Heart right ventricle (tissue), 16 donors: ENCODE measurements at regions of chr19 and their contacts with region 1.

Region 1: DNA sequence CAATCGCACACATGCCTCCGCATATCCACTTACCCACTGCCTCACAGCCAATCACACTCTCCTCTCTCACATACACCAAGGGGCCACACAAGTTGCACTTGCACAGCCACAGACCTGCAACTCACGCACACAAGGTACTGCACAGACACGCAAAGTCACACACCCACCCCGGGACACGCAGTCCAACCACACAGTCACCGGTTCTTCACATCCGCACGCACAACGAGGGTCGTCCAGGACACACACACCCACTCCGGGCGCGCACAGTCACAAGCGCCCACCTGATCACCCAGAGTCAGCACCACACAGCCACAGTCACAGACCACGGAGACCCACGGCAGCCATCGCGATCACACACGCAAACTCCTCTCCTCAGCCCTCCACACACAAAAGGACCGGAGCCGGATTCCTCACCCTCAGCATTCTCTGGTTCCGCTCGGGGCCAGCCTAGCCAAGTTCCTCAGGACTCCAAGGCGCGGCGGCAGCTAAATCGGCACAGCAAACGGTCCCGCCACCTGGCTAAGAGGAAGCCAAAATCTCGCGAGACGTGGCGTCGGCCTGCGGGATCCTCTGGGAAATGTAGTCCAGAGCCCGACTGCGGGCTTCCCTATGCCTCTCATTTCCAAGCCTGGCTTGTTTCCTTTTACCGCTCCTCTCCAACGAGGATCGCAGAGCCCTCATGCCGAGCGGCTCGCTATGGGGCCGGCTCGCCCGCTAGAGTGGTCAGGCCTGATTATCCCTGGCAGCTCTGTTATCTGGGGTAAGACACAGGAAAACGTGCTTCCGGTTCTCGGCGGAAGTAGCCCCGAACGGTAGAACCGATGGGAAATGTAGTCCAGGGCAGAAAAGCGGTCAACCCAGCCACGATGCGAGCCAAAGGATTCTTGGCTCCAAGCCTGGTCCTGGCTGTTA is at the start of gene ZNF850:
- DNase-seq: peak; percentile 96
- ATAC-seq: peak; percentile 94 to 98 (median 98)
- H3K4me3 ChIP-seq: peak within 1 kb of the TSS; percentile 26 to 96 (median 72)
- H3K27ac ChIP-seq: peak within 1 kb of the TSS; percentile 20 to 92 (median 85)
- H3K4me1 ChIP-seq: peaks cover 0 to 26% (median 17%) of the 10 kb centered on the region in 9 donors
- H3K27me3 ChIP-seq: no peaks in the 10 kb centered on the region
- CTCF ChIP-seq: no peak
- total RNA-seq, gene ZNF850: 1.9 to 7.9 (median 4.7) TPM

Region 2: GRCh38 chr19:36207605-36208252 is 564.8 kb before region 1 on chr19:
- intact Hi-C with region 1: no loop called
- DNase-seq: no peak
- ATAC-seq: no peak
- H3K4me3 ChIP-seq: no peak overlapping the region
- H3K27ac ChIP-seq: no peak overlapping the region
- H3K4me1 ChIP-seq: no peaks in the 10 kb centered on the region
- H3K27me3 ChIP-seq: no peaks in the 10 kb centered on the region
- CTCF ChIP-seq: no peak

Region 3: DNA sequence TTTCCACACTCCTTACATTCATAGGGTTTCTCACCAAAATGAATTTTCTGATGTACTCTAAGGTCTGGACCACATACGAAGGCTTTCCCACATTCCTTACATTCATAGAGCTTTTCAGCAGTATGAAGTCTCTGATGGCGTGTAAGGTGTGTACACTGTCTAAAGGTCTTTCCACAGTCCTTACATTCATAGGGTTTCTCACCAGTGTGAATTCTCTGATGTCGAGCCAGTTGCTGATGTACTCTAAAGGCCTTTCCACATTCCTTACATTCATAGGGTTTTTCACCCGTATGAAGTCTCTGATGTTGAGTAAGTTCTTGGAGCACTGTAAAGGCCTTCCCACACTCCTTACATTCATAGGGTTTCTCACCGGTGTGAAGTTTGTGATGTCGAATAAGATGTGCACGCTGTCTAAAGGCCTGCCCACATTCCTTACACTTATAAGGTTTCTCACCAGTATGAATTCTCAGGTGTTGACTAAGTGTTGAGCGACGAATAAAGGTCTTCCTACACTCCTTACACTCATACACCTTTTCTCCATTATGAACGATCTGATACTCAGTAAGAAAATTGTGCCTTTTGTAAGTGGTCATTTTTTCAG is 431.7 kb before region 1 on chr19:
- intact Hi-C with region 1: no loop called
- DNase-seq: no peak
- ATAC-seq: no peak
- H3K4me3 ChIP-seq: no peak overlapping the region
- H3K27ac ChIP-seq: no peak overlapping the region
- H3K4me1 ChIP-seq: no peaks in the 10 kb centered on the region
- H3K27me3 ChIP-seq: no peaks in the 10 kb centered on the region
- CTCF ChIP-seq: no peak

Region 4: GRCh38 chr19:36687214-36688056 is 85.1 kb before region 1 on chr19 and contains the start of gene ZNF567:
- intact Hi-C with region 1: loop called in 1 of 10 experiments (anchors 10 kb)
- DNase-seq: peak; percentile 98
- ATAC-seq: peak; percentile 99 to 100 (median 99)
- H3K4me3 ChIP-seq: peak within 1 kb of the TSS; percentile 60 to 89 (median 80)
- H3K27ac ChIP-seq: peak within 1 kb of the TSS in 9 of 10 donors; percentile 38 to 86 (median 75)
- H3K4me1 ChIP-seq: peaks cover 4 to 26% (median 19%) of the 10 kb centered on the region in 9 donors
- H3K27me3 ChIP-seq: no peaks in the 10 kb centered on the region
- CTCF ChIP-seq: no peak
- total RNA-seq, gene ZNF567: 1.9 to 4.7 (median 3.7) TPM

Region 5: GRCh38 chr19:36796076-36796992 is 23.8 kb after region 1 on chr19:
- intact Hi-C with region 1: loop called in 3 of 10 experiments (anchors 1 to 2 kb)
- DNase-seq: no peak
- ATAC-seq: no peak
- H3K4me3 ChIP-seq: peak overlapping the region; percentile 40 to 95 (median 74)
- H3K27ac ChIP-seq: peak overlapping the region in 9 of 10 donors; percentile 62 to 93 (median 80)
- H3K4me1 ChIP-seq: peaks cover 0 to 20% (median 12%) of the 10 kb centered on the region in 9 donors
- H3K27me3 ChIP-seq: no peaks in the 10 kb centered on the region
- CTCF ChIP-seq: no peak

Region 6: DNA sequence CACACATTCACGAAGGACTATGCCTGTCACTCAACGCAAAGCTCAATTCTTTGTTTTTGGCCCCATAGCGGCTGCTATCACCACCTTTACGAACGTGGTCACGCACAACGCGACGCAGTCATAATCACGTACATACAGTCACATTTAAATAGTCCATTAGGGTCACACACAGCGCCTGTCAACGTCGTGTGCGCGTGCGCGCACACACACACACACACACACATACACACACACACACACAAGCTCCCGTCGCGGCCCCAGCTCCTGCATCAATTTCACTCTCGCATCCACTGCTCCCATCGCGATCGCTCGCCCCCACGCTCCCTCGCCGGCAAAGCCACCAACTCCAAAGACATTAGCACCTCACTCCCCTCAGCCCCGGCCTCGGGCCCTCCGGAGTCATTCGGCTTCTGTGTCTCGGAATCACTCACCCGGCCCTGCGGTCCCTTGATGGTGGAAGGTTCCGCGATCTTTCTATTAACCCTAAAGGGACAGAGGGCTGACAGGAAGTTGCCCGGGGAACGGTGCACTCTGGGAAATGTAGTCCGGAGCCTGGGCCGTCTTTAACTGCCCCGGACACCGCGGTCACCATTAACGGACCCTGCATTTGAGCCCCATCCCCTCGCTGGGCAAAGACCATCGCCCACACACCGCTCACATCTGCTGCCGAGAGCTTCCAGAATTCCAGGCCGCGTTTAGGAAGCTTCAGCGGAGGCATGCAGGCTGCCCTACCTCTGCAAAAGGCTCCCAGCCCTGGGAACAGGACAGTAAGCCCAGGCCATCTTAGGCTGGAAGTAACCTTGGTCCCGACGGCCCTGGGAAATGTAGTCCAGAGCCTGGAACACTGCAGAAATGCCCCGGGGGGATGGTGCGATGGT is 65.6 kb after region 1 on chr19 and contains the start of gene ZNF790:
- intact Hi-C with region 1: loop called in 3 of 10 experiments (anchors 1 to 10 kb)
- DNase-seq: peak; percentile 85 to 93
- ATAC-seq: peak; percentile 98 to 99 (median 99)
- H3K4me3 ChIP-seq: peak within 1 kb of the TSS; percentile 56 to 80 (median 76)
- H3K27ac ChIP-seq: peak within 1 kb of the TSS; percentile 78 to 94 (median 92)
- H3K4me1 ChIP-seq: peaks cover 0 to 24% (median 14%) of the 10 kb centered on the region in 9 donors
- H3K27me3 ChIP-seq: no peaks in the 10 kb centered on the region
- CTCF ChIP-seq: no peak
- total RNA-seq, gene ZNF790: 4.5 to 11.8 (median 8.7) TPM

Region 7: DNA sequence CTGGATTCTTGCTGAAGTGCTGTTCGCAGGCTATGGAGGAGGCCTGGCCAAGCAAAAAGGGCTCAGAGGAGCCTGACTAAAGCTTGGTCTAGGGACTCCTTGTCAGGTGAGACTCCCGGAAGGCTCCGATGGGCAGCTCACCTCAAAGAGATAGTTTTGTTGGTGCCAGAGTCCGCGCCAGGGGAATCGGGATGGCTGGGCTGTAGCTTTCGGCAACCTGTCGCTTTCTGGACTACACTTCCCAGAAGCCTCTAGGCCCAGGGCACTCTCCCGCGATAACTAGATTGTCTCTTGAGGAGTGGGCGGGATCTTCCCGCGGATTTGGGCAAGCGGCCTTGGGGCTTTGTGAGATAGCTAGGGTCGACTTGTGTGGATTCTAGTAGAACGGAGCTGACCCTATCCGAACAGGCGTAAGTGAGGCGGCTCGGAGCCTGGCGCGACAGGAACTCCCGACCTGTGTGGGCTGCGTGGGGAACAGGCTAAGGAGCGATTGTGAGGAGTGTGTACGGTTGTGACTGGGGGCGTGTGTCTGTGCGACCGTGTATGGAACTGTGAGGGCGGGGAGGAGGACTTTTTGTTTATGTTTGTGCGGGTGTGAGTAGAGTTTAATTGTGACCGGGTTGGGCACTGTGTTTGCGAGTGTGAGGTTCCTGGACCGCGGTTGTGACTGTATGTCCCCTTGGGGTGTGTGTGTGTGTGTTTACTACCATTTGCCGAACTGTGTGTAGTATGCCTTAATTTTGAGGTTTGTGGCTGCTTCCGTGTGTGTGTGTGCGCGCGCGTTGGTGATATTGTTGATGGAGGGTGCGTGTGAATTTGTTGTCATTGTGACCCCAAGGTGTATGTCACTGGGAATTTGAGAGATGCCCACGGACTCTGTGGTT is 78.2 kb after region 1 on chr19 and contains the start of gene ZNF345:
- intact Hi-C with region 1: loop called in 3 of 10 experiments (anchors 1 to 2 kb)
- DNase-seq: peak; percentile 86 to 94
- ATAC-seq: peak; percentile 96 to 98 (median 97)
- H3K4me3 ChIP-seq: peak within 1 kb of the TSS; percentile 46 to 92 (median 76)
- H3K27ac ChIP-seq: peak within 1 kb of the TSS; percentile 32 to 96 (median 92)
- H3K4me1 ChIP-seq: peaks cover 0 to 38% (median 17%) of the 10 kb centered on the region in 9 donors
- H3K27me3 ChIP-seq: no peaks in the 10 kb centered on the region
- CTCF ChIP-seq: no peak
- total RNA-seq, gene ZNF345: 2.2 to 4.5 (median 3.0) TPM

Region 8: DNA sequence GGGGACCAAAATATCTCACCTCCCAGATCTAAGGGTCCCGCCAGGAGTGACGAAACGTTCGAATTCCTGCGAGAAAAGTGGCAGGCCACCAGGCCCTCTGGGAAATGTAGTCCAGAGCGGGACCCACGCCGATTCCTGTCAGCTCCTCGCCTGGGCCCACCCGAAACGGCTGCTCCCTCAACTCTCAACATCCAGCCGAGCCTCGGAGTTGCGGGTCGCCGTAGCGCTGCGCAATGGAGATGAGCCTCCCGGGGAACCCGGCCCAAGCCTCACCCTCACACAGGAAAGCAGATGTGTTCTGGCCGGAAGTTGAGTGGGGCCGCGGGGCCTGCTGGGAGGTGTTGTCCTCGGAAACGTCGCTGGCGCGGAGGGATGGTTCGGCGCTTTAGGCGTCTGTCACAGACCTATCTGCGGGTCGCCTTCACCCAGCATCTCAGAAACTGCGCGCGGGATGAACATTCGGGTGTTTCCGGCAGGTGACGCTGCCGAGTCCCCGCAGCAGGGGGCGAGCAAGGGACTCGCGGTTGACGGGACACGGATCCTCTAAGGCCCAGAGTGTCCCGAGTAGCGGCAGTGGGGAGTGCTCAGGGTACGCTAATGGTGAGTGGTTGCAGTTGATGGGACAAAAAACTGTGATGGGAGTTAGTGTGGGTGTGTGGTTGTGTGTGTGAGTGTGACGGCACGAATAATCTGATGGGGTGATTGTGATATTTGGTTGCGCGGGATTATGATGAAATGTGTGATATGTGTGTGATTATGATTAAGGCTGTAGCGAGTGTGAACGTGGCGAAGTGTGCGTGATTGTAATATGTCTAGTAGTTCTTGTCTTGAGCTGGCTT is 143.6 kb after region 1 on chr19 and contains the starts of genes ZNF568 and ZNF829:
- intact Hi-C with region 1: loop called in 1 of 10 experiments (anchors 5 kb)
- DNase-seq: peak; percentile 90 to 93
- ATAC-seq: peak; percentile 98 to 99 (median 98)
- H3K4me3 ChIP-seq: peak within 1 kb of the TSS; percentile 53 to 97 (median 72)
- H3K27ac ChIP-seq: peak within 1 kb of the TSS; percentile 88 to 99 (median 94)
- H3K4me1 ChIP-seq: peaks cover 0 to 21% (median 11%) of the 10 kb centered on the region in 9 donors
- H3K27me3 ChIP-seq: no peaks in the 10 kb centered on the region
- CTCF ChIP-seq: peak; percentile 26 to 82 (median 67)
- total RNA-seq, gene ZNF568: 6.9 to 11.5 (median 9.1) TPM
- total RNA-seq, gene ZNF829: 1.4 to 4.1 (median 2.8) TPM